Ascending aorta (tissue), 2 donors: ENCODE measurements at regions of chr4 and their contacts with region 1.

Region 1: DNA sequence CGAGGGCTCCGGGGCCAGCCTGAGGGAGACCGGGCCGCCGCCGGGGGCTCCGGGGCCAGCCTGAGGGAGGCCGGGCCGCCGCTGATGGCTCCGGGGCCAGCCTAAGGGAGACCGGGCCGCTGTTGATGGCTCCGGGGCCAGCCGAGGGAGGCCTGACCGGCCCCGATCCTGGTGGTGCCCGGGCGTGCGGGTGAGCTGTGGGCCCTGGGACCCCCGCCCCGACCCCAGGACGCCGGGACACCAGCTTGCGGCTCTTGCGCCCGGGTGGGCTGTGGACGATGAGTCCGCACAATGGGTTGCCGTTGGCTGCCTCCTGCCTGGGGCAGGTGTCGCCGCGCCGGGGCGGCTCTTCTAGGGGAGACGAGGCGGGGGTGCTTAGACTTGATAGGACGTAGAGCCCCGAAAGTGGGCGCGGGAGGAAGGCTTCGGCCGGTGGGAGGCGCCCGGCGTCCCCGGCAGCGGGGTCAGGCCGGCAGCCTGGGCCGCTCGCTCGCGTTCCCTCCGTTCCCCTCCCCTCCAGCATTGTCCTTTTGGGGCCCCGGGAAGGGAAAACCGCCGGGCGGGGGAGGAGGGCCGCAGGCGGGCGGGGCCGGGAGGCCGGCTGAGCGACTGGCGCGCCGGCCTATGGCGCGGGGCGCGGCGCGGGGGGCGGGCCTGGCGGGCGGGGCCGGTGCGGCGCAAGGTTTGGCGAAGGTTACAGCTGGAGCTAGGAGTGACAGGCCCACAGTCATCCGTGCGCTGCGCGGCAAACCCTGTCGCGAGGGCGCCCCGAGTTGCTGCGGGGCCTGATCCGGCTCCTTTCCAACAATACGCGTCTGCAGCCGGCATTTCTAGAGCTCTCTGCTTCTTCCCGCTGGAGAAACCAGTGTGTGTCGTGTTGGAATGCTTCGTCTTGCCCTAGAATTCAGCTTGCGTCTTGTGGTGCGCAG is 790 bp downstream of the KIAA0232 start:
- DNase-seq: peak; percentile 60 to 94
- H3K4me3 ChIP-seq: peak overlapping the region; percentile 87 to 98
- H3K27ac ChIP-seq: peak overlapping the region; percentile 98 to 100
- H3K4me1 ChIP-seq: peaks cover 18 to 36% of the 10 kb centered on the region in 2 donors
- H3K27me3 ChIP-seq: no peaks in the 10 kb centered on the region
- CTCF ChIP-seq: peak in 2 of 3 experiments; percentile 9 to 28

Region 2: DNA sequence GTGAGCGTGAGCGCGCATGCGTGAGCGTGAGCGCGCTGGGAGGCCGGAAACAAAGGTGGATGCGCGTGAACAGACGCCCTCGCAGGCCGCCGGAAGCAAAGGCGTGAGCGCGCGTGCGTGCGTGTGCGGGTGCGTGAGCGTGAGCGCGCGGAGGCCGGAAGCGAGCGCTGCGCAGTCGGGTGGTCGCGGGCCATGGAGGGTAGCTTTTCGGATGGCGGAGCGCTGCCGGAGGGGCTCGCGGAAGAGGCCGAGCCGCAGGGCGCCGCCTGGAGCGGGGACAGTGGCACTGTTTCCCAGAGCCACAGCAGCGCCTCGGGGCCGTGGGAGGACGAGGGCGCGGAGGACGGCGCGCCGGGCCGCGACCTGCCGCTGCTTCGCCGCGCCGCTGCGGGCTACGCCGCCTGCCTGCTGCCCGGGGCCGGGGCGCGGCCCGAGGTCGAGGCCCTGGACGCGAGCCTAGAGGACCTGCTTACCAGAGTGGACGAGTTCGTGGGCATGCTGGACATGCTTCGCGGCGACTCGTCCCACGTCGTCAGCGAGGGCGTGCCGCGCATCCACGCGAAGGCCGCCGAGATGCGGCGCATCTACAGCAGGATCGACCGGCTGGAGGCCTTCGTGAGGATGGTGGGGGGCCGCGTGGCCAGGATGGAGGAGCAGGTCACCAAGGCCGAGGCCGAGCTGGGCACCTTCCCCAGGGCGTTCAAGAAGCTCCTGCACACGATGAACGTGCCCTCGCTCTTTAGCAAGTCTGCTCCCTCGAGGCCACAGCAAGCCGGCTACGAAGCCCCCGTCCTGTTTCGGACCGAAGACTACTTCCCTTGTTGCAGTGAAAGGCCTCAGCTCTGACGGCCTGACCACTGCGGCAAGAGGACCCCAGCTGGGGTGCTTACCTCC is 67.1 kb before region 1 on chr4 and contains the start of gene BLOC1S4:
- intact Hi-C with region 1: loop called (anchors 1 kb)
- DNase-seq: peak; percentile 36 to 91
- H3K4me3 ChIP-seq: peak within 1 kb of the TSS; percentile 87 to 98
- H3K27ac ChIP-seq: peak within 1 kb of the TSS; percentile 88 to 95
- H3K4me1 ChIP-seq: peaks cover 4 to 14% of the 10 kb centered on the region in 2 donors
- H3K27me3 ChIP-seq: no peaks in the 10 kb centered on the region
- CTCF ChIP-seq: peak; percentile 21 to 31 (median 23)
- total RNA-seq, gene BLOC1S4: 37.5 TPM

Region 3: DNA sequence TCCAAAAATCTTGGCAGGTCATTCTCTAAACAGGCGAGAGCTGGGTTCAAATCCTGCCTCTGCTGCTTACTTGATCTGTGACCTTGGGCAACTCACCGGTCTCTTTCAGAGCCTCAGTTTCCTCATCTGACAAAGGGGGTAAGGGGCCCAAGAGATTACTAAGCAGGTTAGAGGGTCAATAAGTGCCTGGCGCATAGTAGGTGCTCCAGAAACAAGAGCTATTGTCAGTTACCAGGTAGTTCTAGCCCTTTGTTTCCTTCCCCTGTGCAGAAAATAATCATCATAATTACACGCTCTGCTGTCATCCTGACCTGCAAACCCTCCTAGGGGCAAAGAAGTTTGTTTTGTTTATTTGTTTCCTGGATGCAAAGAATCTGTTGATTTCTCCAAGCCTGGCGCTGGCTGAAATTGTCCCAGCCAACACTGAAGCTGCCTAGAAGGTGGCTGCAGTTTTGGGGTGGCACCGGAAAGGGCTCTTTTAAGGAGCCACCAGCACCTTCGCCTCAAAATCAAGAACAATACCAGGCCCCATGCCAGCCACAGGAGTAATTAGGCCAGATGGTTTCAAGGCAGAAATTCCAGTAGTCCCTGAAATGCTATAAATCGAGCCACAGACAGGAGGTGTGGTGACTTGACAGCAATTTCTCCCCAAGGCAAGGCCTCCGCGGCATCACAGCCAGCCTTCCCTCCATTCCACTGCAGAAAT is 10.9 kb before region 1 on chr4:
- intact Hi-C with region 1: loop called (anchors 1 kb)
- DNase-seq: no peak
- H3K4me3 ChIP-seq: no peak overlapping the region
- H3K27ac ChIP-seq: peak overlapping the region; percentile 72 to 90
- H3K4me1 ChIP-seq: peaks cover 9 to 41% of the 10 kb centered on the region in 2 donors
- H3K27me3 ChIP-seq: no peaks in the 10 kb centered on the region
- CTCF ChIP-seq: no peak

Region 4: DNA sequence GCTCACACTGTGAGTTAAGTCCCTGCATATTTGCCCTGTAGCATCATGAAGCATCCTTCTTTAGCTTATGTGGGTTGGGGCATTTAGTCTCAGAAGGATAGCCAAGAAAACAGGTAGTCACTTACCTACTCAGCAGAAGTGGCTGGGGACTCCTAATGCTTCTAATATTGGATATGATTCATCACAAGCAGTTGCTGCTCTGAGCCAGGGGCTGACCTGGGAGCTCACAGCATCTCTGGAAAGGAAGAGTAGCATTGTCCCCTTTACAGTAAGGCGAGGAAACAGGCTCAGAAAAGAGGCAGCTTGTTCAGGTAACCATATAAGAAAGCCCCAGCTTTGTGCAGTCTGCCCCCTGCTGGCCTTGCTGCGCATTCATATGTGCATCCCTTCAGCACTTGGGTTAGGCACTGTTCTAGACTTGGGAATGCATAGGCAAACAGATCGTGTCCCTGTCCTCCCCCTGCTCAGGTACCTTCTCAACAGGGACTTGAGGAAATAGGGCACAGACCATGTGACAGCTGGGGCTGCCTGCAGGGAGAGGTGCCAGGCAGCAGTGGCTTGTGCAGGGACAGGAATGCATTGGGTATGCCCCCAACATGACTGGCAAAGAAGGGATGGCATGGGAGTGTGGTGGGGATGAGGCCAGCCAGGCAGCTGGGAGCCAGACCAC is 90.6 kb after region 1 on chr4:
- intact Hi-C with region 1: loop called (anchors 5 kb)
- DNase-seq: peak in 1 of 2 donors; percentile 83
- H3K4me3 ChIP-seq: no peak overlapping the region
- H3K27ac ChIP-seq: no peak overlapping the region
- H3K4me1 ChIP-seq: no peaks in the 10 kb centered on the region
- H3K27me3 ChIP-seq: no peaks in the 10 kb centered on the region
- CTCF ChIP-seq: peak; percentile 79 to 84 (median 84)

Region 5: GRCh38 chr4:6986781-6987587 is 203.7 kb after region 1 on chr4:
- intact Hi-C with region 1: loop called (anchors 5 kb)
- DNase-seq: peak; percentile 75 to 96
- H3K4me3 ChIP-seq: peak overlapping the region; percentile 65 to 83
- H3K27ac ChIP-seq: peak overlapping the region; percentile 92
- H3K4me1 ChIP-seq: peaks cover 9 to 31% of the 10 kb centered on the region in 2 donors
- H3K27me3 ChIP-seq: no peaks in the 10 kb centered on the region
- CTCF ChIP-seq: no peak

Region 6: GRCh38 chr4:8158710-8159536 is 1375.6 kb after region 1 on chr4 and contains the start of gene ABLIM2:
- intact Hi-C with region 1: loop called (anchors 5 kb)
- DNase-seq: peak; percentile 92 to 99
- H3K4me3 ChIP-seq: peak within 1 kb of the TSS; percentile 86 to 94
- H3K27ac ChIP-seq: peak within 1 kb of the TSS; percentile 36 to 50
- H3K4me1 ChIP-seq: peaks cover 13 to 25% of the 10 kb centered on the region in 2 donors
- H3K27me3 ChIP-seq: no peaks in the 10 kb centered on the region
- CTCF ChIP-seq: no peak
- total RNA-seq, gene ABLIM2: 30.8 TPM